ENCODE measurements at regions of chr14 and their contacts with region 1.

Region 1: GRCh38 chr14:91138511-91139359 is 24.9 kb downstream of the DGLUCY start:
- DNase-seq: peak; percentile 46
- H3K4me3 Mint-ChIP-seq: no peak overlapping the region
- H3K27ac Mint-ChIP-seq: peak overlapping the region; percentile 72
- H3K4me1 Mint-ChIP-seq: peaks cover 52% of the 10 kb centered on the region
- H3K27me3 Mint-ChIP-seq: no peaks in the 10 kb centered on the region

Region 2: GRCh38 chr14:91035855-91036254 is 102.9 kb before region 1 on chr14:
- intact Hi-C with region 1: no loop called
- DNase-seq: no peak
- H3K4me3 Mint-ChIP-seq: no peak overlapping the region
- H3K27ac Mint-ChIP-seq: peak overlapping the region; percentile 64
- H3K4me1 Mint-ChIP-seq: peaks cover 68% of the 10 kb centered on the region
- H3K27me3 Mint-ChIP-seq: no peaks in the 10 kb centered on the region

Region 3: DNA sequence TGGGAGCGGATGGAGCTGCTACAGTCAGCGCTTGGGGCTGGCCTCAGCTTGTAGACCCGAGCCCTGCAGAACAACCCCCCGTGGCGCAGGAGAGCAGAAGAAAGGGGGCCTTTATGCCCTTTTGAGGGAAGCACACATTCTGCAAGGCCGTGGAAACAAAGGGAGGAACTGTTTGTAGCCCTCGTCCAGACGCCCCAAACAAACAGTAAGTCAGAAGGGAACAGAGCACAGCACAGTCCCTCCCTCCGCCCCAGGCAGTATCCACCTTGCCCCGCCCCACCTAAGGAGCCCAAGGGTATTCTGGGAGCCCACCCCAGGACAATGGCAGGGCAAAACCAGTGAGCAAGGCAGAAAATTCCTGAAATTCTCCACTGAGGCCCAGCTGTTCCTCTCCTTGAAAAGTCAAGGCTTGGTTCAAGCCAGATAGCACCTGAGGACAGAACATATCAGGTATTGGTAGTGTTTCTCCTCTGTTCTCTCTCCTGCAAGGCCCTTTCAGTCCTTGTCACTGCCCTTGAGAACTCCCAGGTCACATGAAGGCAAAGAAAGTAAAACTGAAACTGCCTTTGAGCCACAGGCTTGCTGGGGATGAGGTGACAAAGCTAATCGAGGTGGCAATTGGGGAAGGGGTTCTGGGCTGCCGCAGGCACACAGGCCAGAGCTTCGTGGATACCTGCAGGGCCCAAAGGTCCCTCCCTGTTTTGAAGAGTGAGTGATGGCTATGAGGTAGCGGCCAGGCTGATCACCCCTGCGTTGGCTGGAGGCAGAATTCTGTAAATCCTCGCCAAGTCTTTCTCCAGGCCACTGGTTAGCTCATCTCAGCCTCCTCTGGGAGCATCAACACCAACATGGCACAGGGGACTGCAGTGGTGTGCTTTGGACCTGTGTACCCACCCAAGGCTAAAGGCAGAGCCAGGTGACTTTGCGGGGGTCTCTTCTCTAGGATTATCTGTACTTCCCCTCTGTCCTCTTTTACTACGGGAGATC is 24.4 kb before region 1 on chr14:
- intact Hi-C with region 1: loop called (anchors 2 kb)
- DNase-seq: peak; percentile 77
- H3K4me3 Mint-ChIP-seq: peak overlapping the region; percentile 95
- H3K27ac Mint-ChIP-seq: peak overlapping the region; percentile 92
- H3K4me1 Mint-ChIP-seq: peaks cover 59% of the 10 kb centered on the region
- H3K27me3 Mint-ChIP-seq: no peaks in the 10 kb centered on the region

Region 4: GRCh38 chr14:91177073-91178034 is 38.6 kb after region 1 on chr14:
- intact Hi-C with region 1: loop called (anchors 2 kb)
- DNase-seq: peak; percentile 69
- H3K4me3 Mint-ChIP-seq: no peak overlapping the region
- H3K27ac Mint-ChIP-seq: peak overlapping the region; percentile 86
- H3K4me1 Mint-ChIP-seq: peaks cover 17% of the 10 kb centered on the region
- H3K27me3 Mint-ChIP-seq: no peaks in the 10 kb centered on the region